IMR-90 (cell line): ENCODE measurements at regions of chr1 and their contacts with region 1.

Region 1: DNA sequence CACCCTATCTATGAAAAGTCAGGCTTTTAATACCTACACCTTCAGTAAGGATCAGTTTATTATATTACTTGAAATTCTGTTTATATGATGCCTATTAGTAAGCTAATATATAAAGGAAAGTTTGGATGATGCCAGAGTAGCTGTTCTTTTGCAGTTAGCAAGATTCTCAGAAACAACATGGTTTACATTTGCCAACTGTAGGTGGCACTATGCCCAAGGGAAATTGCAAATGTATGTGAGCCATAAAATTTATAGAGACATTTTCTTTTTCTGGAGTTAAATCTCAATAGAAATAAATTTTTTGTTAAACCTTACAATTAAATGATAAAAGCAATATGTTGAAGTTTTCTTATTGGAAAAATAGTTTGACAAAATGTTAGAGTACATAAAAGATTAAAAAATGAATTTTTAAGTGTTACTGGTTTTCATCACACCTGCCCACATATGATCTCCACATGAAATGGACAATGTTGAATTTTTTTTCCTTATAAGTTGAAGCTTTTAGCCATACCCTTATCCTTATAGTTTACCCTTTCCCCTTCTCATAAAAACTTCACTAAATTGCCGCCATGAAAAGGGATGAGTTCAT is 32.1 kb upstream of the EPHX4 start:
- DNase-seq: peak; percentile 68
- ATAC-seq: no peak
- H3K4me3 ChIP-seq: no peak overlapping the region
- H3K27ac ChIP-seq: no peak overlapping the region
- H3K4me1 ChIP-seq: no peaks in the 10 kb centered on the region
- H3K27me3 ChIP-seq: no peaks in the 10 kb centered on the region
- CTCF ChIP-seq: peak; percentile 78
- POLR2A ChIP-seq: no peak
- RAD21 ChIP-seq: peak; percentile 87

Region 2: DNA sequence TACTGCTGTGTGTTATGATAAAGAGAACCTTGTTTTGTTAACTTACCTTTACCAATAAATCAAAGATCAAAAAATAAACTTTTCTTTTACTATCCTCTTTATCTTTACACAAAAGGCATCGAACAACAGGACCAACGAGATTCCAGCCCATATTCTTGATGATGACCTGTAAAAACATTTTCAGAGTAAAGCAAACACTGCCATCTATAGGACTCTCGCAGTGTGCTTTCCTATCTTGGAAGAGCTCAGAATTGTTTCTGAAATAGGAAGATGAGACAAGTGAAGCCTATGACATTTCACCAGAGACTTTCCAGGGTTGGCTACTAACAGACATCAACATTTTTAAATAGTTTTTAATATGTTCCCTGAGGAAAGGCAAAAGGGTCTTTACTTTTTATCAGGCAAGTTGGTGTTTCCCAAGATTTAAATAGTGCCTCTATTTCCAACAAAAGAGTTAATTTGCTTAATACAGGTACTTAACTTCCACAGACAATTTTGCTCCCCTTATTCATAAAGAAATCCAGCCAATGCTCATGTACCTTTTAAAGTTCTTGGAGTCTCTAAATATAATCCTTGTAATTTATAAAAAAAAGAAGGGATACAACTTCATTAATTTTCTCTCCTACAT is 293.8 kb after region 1 on chr1:
- CTCF ChIA-PET with region 1: interaction called, 29 read pairs
- POLR2A ChIA-PET with region 1: no interaction called
- dilution Hi-C with region 1: no loop called
- in situ Hi-C with region 1: loop called (anchors 5 kb)
- intact Hi-C with region 1: loop called (anchors 1 kb)
- DNase-seq: peak; percentile 77
- ATAC-seq: peak; percentile 92
- H3K4me3 ChIP-seq: no peak overlapping the region
- H3K27ac ChIP-seq: no peak overlapping the region
- H3K4me1 ChIP-seq: no peaks in the 10 kb centered on the region
- H3K27me3 ChIP-seq: no peaks in the 10 kb centered on the region
- CTCF ChIP-seq: peak; percentile 87
- POLR2A ChIP-seq: no peak
- RAD21 ChIP-seq: peak; percentile 85